Psoas muscle (tissue), 8 donors: ENCODE measurements at regions of chr5 and their contacts with region 1.

Region 1: GRCh38 chr5:120306303-120306702 is 157.8 kb upstream of the PRR16 start:
- DNase-seq: no peak
- ATAC-seq: no peak
- H3K4me3 ChIP-seq: no peak overlapping the region
- H3K27ac ChIP-seq: no peak overlapping the region
- H3K4me1 ChIP-seq: no peaks in the 10 kb centered on the region
- H3K27me3 ChIP-seq: no peaks in the 10 kb centered on the region
- CTCF ChIP-seq: no peak

Region 2: DNA sequence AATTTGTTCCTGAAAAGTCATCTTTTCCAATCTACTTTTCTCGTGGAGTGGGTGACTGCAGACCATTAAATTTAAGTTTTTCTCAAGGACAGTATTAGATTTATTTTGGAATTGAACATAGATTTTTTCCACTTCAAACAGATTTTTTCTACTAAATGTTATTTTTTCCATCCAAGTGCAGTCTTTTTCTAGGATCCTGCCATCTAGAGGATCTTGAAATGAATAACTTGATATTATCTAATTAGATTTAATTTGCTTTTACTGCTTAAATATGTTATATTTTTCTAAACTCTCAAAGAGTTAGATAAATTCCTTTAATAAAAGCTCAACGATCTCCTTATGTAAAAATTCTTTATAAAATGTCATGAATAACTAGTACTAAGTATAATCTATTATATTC is 20.9 kb after region 1 on chr5:
- intact Hi-C with region 1: loop called in 1 of 2 experiments (anchors 1 kb)
- DNase-seq: no peak
- ATAC-seq: no peak
- H3K4me3 ChIP-seq: no peak overlapping the region
- H3K27ac ChIP-seq: no peak overlapping the region
- H3K4me1 ChIP-seq: no peaks in the 10 kb centered on the region
- H3K27me3 ChIP-seq: no peaks in the 10 kb centered on the region
- CTCF ChIP-seq: no peak